ENCODE measurements at regions of chr6 and their contacts with region 1.

Region 1: DNA sequence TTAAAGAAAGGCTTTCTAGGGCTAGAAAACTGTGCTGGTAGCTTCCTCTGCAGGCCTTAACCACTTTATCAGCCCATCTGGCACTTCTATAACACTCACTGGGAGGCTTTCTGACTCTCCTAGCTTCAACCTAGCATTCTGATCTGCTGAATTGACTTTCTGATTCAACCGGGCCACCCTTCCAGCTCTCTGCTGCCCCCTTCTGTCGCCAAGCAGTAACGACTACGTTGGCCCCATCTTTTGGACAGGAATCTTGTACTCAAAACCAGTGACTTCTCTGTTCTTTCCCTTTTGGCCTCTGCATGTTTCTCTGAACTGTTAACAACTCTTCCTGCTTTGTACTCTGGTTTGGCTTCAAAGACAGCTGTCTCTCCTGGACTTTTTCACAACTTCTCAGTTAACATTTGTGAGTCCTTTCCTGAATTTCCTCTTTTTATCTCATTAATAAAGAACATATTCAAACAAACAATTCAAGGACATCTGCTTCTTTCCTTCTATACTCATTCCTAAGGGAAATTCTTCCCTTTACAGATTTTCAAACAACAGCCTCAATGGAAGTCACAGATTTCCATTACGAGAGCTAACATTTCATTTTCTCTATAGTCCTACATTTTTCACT is 43.9 kb upstream of the FAM135A start:
- DNase-seq: peak; percentile 52
- H3K4me3 Mint-ChIP-seq: no peak overlapping the region
- H3K27ac Mint-ChIP-seq: no peak overlapping the region
- H3K4me1 Mint-ChIP-seq: no peaks in the 10 kb centered on the region
- H3K27me3 Mint-ChIP-seq: peaks cover 33% of the 10 kb centered on the region

Region 2: GRCh38 chr6:70221025-70221714 is 148.3 kb before region 1 on chr6:
- intact Hi-C with region 1: loop called (anchors 2 kb)
- DNase-seq: no peak
- H3K4me3 Mint-ChIP-seq: no peak overlapping the region
- H3K27ac Mint-ChIP-seq: no peak overlapping the region
- H3K4me1 Mint-ChIP-seq: no peaks in the 10 kb centered on the region
- H3K27me3 Mint-ChIP-seq: peaks cover 3% of the 10 kb centered on the region

Region 3: GRCh38 chr6:70299456-70299855 is 70.0 kb before region 1 on chr6:
- intact Hi-C with region 1: no loop called
- DNase-seq: no peak
- H3K4me3 Mint-ChIP-seq: no peak overlapping the region
- H3K27ac Mint-ChIP-seq: no peak overlapping the region
- H3K4me1 Mint-ChIP-seq: no peaks in the 10 kb centered on the region
- H3K27me3 Mint-ChIP-seq: peaks cover 3% of the 10 kb centered on the region

Region 4: DNA sequence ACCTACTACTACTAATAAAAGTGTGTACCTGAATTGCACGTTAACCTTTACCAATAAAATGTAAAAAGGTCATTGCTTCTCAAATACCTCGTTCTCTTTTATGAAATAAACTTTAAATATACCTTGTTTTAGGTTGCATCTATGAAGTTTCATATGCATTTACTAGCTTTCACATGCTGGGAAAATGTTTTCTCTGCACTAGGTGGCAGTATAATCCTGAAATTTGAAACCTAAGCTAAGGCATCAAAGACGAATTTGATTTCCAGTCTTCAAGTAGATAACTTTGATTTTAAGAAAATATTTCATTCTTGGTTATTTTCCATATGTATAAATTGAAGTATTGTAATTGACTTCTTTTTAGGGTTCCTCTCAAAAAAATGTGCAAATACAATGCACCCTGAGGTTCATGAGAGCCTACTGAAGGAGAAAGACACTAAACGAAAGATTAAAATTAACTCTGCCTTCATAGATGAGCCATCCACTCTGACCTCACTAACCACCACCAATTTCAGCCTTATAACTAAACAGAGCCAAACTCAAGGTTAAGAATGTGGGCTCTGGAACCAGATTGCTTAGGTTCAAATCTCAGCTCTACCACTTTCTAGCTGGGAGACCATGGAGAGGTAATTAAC is 59.3 kb before region 1 on chr6:
- intact Hi-C with region 1: loop called (anchors 1 kb)
- DNase-seq: no peak
- H3K4me3 Mint-ChIP-seq: no peak overlapping the region
- H3K27ac Mint-ChIP-seq: no peak overlapping the region
- H3K4me1 Mint-ChIP-seq: peaks cover 14% of the 10 kb centered on the region
- H3K27me3 Mint-ChIP-seq: peaks cover 33% of the 10 kb centered on the region

Region 5: GRCh38 chr6:70686548-70687133 is 317.2 kb after region 1 on chr6:
- intact Hi-C with region 1: loop called (anchors 5 kb)
- DNase-seq: no peak
- H3K4me3 Mint-ChIP-seq: no peak overlapping the region
- H3K27ac Mint-ChIP-seq: no peak overlapping the region
- H3K4me1 Mint-ChIP-seq: peaks cover 25% of the 10 kb centered on the region
- H3K27me3 Mint-ChIP-seq: no peaks in the 10 kb centered on the region